HEK293T (cell line): ENCODE measurements at regions of chr6 and their contacts with region 1.

Region 1: GRCh38 chr6:114569669-114570068 is 226.8 kb upstream of the HS3ST5 start:
- DNase-seq: peak; percentile 24

Region 2: DNA sequence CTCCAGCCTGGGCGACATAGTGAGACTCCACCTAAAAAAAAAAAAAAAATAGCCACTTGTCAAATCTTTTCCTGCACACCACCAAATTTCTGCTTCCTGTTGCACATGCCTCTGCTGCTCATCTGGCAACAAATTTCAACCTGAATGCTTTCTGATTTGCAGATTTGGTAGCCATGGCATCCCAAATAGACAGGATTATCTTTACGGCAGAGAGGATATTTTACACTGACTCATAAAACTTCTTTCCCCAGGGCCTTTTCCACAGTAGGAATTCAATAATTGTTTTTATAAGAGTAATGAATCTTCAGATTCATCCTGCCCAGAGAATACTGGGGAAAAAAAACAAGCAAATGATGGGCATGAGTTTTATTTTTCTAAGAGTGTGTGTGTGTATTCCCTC is 1226.4 kb after region 1 on chr6:
- CTCF ChIA-PET with region 1: interaction called, 14 read pairs
- POLR2A ChIA-PET with region 1: no interaction called
- DNase-seq: peak; percentile 33